ENCODE measurements at regions of chr12 and their contacts with region 1.

Region 1: GRCh38 chr12:45762185-45763110 is 32.9 kb downstream of the ARID2 start:
- DNase-seq: peak; percentile 76
- ATAC-seq: peak; percentile 89
- H3K4me3 ChIP-seq: no peak overlapping the region
- H3K27ac ChIP-seq: no peak overlapping the region
- H3K4me1 ChIP-seq: no peaks in the 10 kb centered on the region
- H3K27me3 ChIP-seq: no peaks in the 10 kb centered on the region
- CTCF ChIP-seq: peak; percentile 88

Region 2: DNA sequence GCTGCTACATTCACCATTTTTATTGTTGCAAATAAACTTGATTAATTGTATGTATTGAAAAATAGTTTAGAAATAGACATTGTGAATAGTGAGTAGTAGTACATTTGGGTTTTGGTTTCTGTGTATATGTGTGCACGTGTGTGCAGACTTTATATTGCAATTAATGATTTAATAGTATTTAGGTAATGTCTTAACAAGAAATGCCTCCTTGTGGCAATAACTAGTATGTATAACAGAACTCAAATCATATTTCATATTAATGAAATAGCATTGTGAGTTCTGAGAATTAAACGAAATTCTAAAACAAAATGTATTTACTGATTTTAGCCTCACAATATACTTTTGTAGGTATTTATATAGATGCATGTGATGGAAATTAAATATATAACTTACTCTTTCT is 127.8 kb after region 1 on chr12:
- CTCF ChIA-PET with region 1: no interaction called
- POLR2A ChIA-PET with region 1: no interaction called
- intact Hi-C with region 1: loop called (anchors 1 kb)
- DNase-seq: no peak
- ATAC-seq: no peak
- H3K4me3 ChIP-seq: no peak overlapping the region
- H3K27ac ChIP-seq: no peak overlapping the region
- H3K4me1 ChIP-seq: no peaks in the 10 kb centered on the region
- H3K27me3 ChIP-seq: no peaks in the 10 kb centered on the region
- CTCF ChIP-seq: peak; percentile 43; the same call in 1 of the 2 replicates

Region 3: GRCh38 chr12:46005151-46005797 is 242.8 kb after region 1 on chr12:
- CTCF ChIA-PET with region 1: no interaction called
- POLR2A ChIA-PET with region 1: no interaction called
- intact Hi-C with region 1: loop called (anchors 1 kb)
- DNase-seq: peak; percentile 34
- ATAC-seq: no peak; the same call in 1 of the 2 replicates
- H3K4me3 ChIP-seq: no peak overlapping the region
- H3K27ac ChIP-seq: no peak overlapping the region
- H3K4me1 ChIP-seq: no peaks in the 10 kb centered on the region
- H3K27me3 ChIP-seq: no peaks in the 10 kb centered on the region
- CTCF ChIP-seq: peak; percentile 73